HepG2 (cell line): ENCODE measurements at regions of chr5 and their contacts with region 1.

Region 1: GRCh38 chr5:112691758-112692157 is 45.9 kb upstream of the APC start:
- DNase-seq: peak; percentile 65
- ATAC-seq: peak; percentile 92
- H3K4me3 ChIP-seq: no peak overlapping the region
- H3K27ac ChIP-seq: no peak overlapping the region
- H3K4me1 ChIP-seq: no peaks in the 10 kb centered on the region
- H3K27me3 ChIP-seq: no peaks in the 10 kb centered on the region
- CTCF ChIP-seq: peak; percentile 87
- EP300 ChIP-seq: no peak
- POLR2A ChIP-seq: no peak
- RAD21 ChIP-seq: peak; percentile 50; the same call in 1 of the 2 replicates

Region 2: GRCh38 chr5:112551419-112552032 is 140.2 kb before region 1 on chr5:
- CTCF ChIA-PET with region 1: no interaction called
- POLR2A ChIA-PET with region 1: no interaction called
- in situ Hi-C with region 1: no loop called
- intact Hi-C with region 1: loop called (anchors 2 kb)
- DNase-seq: peak; percentile 39
- ATAC-seq: peak; percentile 83
- H3K4me3 ChIP-seq: no peak overlapping the region
- H3K27ac ChIP-seq: no peak overlapping the region
- H3K4me1 ChIP-seq: peaks cover 10% of the 10 kb centered on the region; the same call in 1 of the 2 replicates
- H3K27me3 ChIP-seq: no peaks in the 10 kb centered on the region
- CTCF ChIP-seq: peak; percentile 79
- EP300 ChIP-seq: no peak
- POLR2A ChIP-seq: no peak
- RAD21 ChIP-seq: peak; percentile 76

Region 3: DNA sequence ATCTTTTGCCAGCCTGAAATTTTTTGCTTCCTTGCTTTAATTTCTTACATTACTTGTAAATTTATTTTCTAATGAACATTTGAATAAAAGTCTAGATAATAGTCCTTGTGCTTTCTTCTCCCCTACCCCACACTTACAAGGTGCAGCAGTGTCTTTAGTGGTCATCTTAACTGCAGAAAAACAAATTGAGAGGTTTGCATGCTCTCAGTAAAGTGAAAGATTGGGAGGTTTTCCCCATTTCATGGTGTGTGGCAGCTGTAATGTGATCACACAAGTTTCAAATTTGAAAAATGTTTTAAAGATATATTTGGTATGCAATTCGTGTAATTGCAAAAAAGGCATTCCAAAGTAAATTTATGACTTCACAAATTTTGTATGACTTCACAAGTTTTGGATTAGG is 60.6 kb after region 1 on chr5:
- CTCF ChIA-PET with region 1: interaction called, 19 read pairs
- POLR2A ChIA-PET with region 1: no interaction called
- in situ Hi-C with region 1: loop called (anchors 5 kb)
- intact Hi-C with region 1: loop called (anchors 1 kb)
- DNase-seq: no peak
- ATAC-seq: no peak
- H3K4me3 ChIP-seq: no peak overlapping the region
- H3K27ac ChIP-seq: no peak overlapping the region
- H3K4me1 ChIP-seq: peaks cover 8% of the 10 kb centered on the region; the same call in 1 of the 2 replicates
- H3K27me3 ChIP-seq: no peaks in the 10 kb centered on the region
- CTCF ChIP-seq: no peak
- EP300 ChIP-seq: no peak
- POLR2A ChIP-seq: no peak
- RAD21 ChIP-seq: no peak

Region 4: GRCh38 chr5:112757468-112758208 is 65.9 kb after region 1 on chr5:
- CTCF ChIA-PET with region 1: interaction called, 19 read pairs
- POLR2A ChIA-PET with region 1: no interaction called
- in situ Hi-C with region 1: loop called (anchors 5 kb)
- intact Hi-C with region 1: loop called (anchors 1 kb)
- DNase-seq: peak; percentile 61
- ATAC-seq: peak; percentile 85
- H3K4me3 ChIP-seq: no peak overlapping the region
- H3K27ac ChIP-seq: no peak overlapping the region
- H3K4me1 ChIP-seq: no peaks in the 10 kb centered on the region
- H3K27me3 ChIP-seq: no peaks in the 10 kb centered on the region
- CTCF ChIP-seq: peak; percentile 72
- EP300 ChIP-seq: no peak
- POLR2A ChIP-seq: no peak
- RAD21 ChIP-seq: 0 out of 2 replicates have a peak, but pooled peaks have one; percentile 36

Region 5: DNA sequence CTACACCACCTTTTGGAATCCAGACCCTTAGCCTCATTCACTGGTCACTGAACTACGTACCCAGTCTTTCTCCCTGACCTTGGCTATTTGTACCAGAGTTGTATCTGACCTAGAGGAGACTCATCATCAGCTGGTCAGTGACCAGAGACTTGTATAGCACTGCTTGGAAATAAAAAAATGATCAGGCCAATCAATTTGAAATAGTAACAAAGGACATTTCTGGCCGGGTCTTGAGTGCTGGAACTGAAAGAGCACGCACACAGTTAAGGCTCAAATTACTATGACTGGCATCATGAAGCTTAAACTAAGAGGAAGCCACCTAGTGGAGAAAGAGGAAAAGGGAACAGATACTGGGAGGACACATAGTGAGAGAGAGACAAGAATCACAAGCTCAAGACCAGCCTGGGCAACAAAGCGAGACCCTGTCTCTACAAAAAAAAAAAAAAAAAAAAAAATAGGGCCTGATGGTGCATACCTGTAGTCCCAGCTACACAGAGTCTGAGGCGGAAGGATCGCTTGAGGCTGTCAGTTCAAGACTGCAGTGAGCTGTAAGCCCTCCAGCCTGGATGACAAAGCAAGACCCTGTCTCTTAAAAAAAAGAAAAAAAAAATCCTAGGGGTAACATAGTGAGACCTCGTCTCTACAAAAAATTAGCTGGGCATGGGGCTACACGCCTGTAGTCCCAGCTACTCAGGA is 156.5 kb after region 1 on chr5:
- CTCF ChIA-PET with region 1: interaction called, 3 read pairs
- POLR2A ChIA-PET with region 1: no interaction called
- in situ Hi-C with region 1: loop called (anchors 5 kb)
- intact Hi-C with region 1: loop called (anchors 2 kb)
- DNase-seq: peak; percentile 76
- ATAC-seq: peak; percentile 99
- H3K4me3 ChIP-seq: peak overlapping the region in 1 of 3 experiments; percentile 39; a peak in 1 of 6 replicates
- H3K27ac ChIP-seq: no peak overlapping the region
- H3K4me1 ChIP-seq: peaks cover 16% of the 10 kb centered on the region
- H3K27me3 ChIP-seq: no peaks in the 10 kb centered on the region
- CTCF ChIP-seq: peak; percentile 78
- EP300 ChIP-seq: no peak
- POLR2A ChIP-seq: no peak
- RAD21 ChIP-seq: no peak